Activated CD8-positive, alpha-beta T cell treated with anti-CD3 and anti-CD28 coated beads for 36 hours (primary cell): ENCODE measurements at regions of chr5 and their contacts with region 1.

Region 1: DNA sequence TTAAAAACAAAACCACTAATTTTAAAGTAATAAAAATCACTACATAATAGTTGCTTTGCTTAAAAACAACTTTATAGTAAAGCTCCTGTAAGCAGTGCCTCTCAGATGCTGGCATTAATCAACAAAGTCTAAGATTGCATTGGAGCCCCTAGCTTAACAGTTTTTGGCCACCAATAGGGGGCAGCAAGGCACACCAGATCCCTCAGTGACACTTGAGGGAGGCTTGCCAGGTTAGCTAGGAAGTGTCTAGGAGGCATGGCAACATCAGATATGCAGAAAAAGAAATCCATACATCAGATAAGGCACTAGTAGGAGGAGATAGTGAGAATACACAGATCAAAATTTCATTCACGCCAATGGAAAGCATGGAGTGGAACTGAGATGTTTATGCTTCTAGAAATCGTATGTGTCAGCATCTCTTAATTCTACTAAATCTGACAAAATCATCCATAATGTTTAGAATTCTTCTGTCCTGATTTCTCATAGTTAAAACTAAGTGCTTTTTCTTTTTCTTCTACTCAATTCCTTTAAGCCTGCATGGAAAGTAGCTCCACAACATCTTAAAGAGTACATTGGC is 73.6 kb upstream of the PAM start:
- DNase-seq: peak; percentile 77
- ATAC-seq: peak; percentile 79
- H3K4me3 Mint-ChIP-seq: no peak overlapping the region
- H3K27ac Mint-ChIP-seq: no peak overlapping the region
- H3K4me1 Mint-ChIP-seq: no peaks in the 10 kb centered on the region
- H3K27me3 Mint-ChIP-seq: peaks cover 3% of the 10 kb centered on the region
- CTCF ChIP-seq: peak; percentile 71

Region 2: DNA sequence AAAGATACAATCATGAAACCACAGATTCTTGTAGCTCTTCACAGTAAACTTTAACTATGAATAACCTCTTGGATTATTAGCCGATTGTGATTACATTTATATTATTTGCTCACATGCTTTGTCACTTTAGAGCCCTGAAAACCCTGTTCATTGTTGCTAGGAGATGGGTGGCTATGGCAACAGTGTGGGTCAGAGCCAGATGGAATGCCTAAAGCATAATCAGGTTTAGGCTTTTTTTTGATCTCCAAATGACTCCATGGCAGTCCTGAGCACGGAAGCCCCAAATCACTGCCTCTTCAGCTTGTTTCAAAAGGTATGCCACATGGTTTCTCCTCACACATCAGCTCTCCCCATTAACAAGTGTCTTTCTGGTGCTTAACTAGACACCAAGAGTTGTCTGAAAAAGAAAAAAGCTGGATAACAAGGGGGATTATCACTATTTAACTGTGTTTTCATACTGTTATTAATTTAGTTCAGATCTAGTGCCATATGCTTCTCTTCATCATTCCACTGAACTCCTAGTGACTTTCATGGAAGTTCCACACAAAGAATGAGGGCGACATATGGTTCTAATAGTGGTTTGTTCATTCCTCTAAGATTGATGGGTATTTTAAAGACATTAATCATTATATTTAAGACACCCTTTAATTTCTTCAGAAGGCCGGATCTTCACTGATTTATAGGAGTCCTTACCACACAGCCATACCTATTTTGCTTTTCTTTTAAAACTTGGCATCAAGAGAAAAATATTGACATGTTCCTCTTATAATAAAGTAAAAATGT is 15.1 kb before region 1 on chr5:
- CTCF ChIA-PET with region 1: interaction called, 10 read pairs
- POLR2A ChIA-PET with region 1: no interaction called
- intact Hi-C with region 1: no loop called
- DNase-seq: no peak
- ATAC-seq: no peak
- H3K4me3 Mint-ChIP-seq: no peak overlapping the region
- H3K27ac Mint-ChIP-seq: no peak overlapping the region
- H3K4me1 Mint-ChIP-seq: no peaks in the 10 kb centered on the region
- H3K27me3 Mint-ChIP-seq: peaks cover 4% of the 10 kb centered on the region
- CTCF ChIP-seq: no peak

Region 3: GRCh38 chr5:102722930-102723329 is 41.4 kb after region 1 on chr5:
- CTCF ChIA-PET with region 1: interaction called, 12 read pairs
- POLR2A ChIA-PET with region 1: no interaction called
- intact Hi-C with region 1: no loop called
- DNase-seq: no peak
- ATAC-seq: no peak
- H3K4me3 Mint-ChIP-seq: no peak overlapping the region
- H3K27ac Mint-ChIP-seq: no peak overlapping the region
- H3K4me1 Mint-ChIP-seq: no peaks in the 10 kb centered on the region
- H3K27me3 Mint-ChIP-seq: peaks cover 14% of the 10 kb centered on the region
- CTCF ChIP-seq: no peak

Region 4: DNA sequence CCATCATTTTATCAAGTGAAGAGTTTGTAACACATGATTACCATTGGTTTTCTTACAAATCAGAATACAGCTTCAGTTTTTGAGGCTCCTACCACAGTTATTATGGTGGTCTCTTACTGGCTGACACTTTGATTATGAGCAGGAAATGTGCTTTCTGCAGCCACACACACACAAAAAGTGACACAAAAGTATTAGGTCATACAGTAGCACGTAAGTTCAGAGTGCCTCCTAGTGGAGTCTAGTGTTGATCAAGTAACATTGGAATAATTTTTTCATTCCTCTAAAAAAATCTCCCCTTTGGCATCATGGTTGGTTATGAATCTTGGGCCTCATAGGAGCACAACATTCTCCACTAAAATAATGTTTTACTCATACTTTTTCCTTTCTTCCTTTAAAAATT is 111.2 kb after region 1 on chr5:
- CTCF ChIA-PET with region 1: interaction called, 10 read pairs
- POLR2A ChIA-PET with region 1: no interaction called
- intact Hi-C with region 1: loop called (anchors 2 kb)
- DNase-seq: no peak
- ATAC-seq: peak; percentile 47
- H3K4me3 Mint-ChIP-seq: no peak overlapping the region
- H3K27ac Mint-ChIP-seq: no peak overlapping the region
- H3K4me1 Mint-ChIP-seq: peaks cover 23% of the 10 kb centered on the region
- H3K27me3 Mint-ChIP-seq: no peaks in the 10 kb centered on the region
- CTCF ChIP-seq: no peak

Region 5: GRCh38 chr5:103016176-103016575 is 334.7 kb after region 1 on chr5:
- CTCF ChIA-PET with region 1: no interaction called
- POLR2A ChIA-PET with region 1: no interaction called
- intact Hi-C with region 1: no loop called
- DNase-seq: no peak
- ATAC-seq: no peak
- H3K4me3 Mint-ChIP-seq: no peak overlapping the region
- H3K27ac Mint-ChIP-seq: no peak overlapping the region
- H3K4me1 Mint-ChIP-seq: no peaks in the 10 kb centered on the region
- H3K27me3 Mint-ChIP-seq: no peaks in the 10 kb centered on the region
- CTCF ChIP-seq: no peak

Region 6: GRCh38 chr5:103139264-103139865 is 457.9 kb after region 1 on chr5:
- CTCF ChIA-PET with region 1: interaction called, 28 read pairs
- POLR2A ChIA-PET with region 1: no interaction called
- intact Hi-C with region 1: loop called (anchors 2 kb)
- DNase-seq: peak; percentile 91
- ATAC-seq: peak; percentile 94
- H3K4me3 Mint-ChIP-seq: no peak overlapping the region
- H3K27ac Mint-ChIP-seq: no peak overlapping the region
- H3K4me1 Mint-ChIP-seq: peaks cover 5% of the 10 kb centered on the region
- H3K27me3 Mint-ChIP-seq: no peaks in the 10 kb centered on the region
- CTCF ChIP-seq: peak; percentile 86